ENCODE measurements at regions of chr10 and their contacts with region 1.

Region 1: GRCh38 chr10:75235375-75236177 is at the start of gene COMTD1:
- DNase-seq: peak; percentile 98
- ATAC-seq: peak; percentile 76
- H3K4me3 Mint-ChIP-seq: peak within 1 kb of the TSS; percentile 79
- H3K27ac Mint-ChIP-seq: peak within 1 kb of the TSS; percentile 89
- H3K4me1 Mint-ChIP-seq: peaks cover 31% of the 10 kb centered on the region
- H3K27me3 Mint-ChIP-seq: no peaks in the 10 kb centered on the region
- total RNA-seq, gene COMTD1: 28.1 to 41.0 TPM

Region 2: DNA sequence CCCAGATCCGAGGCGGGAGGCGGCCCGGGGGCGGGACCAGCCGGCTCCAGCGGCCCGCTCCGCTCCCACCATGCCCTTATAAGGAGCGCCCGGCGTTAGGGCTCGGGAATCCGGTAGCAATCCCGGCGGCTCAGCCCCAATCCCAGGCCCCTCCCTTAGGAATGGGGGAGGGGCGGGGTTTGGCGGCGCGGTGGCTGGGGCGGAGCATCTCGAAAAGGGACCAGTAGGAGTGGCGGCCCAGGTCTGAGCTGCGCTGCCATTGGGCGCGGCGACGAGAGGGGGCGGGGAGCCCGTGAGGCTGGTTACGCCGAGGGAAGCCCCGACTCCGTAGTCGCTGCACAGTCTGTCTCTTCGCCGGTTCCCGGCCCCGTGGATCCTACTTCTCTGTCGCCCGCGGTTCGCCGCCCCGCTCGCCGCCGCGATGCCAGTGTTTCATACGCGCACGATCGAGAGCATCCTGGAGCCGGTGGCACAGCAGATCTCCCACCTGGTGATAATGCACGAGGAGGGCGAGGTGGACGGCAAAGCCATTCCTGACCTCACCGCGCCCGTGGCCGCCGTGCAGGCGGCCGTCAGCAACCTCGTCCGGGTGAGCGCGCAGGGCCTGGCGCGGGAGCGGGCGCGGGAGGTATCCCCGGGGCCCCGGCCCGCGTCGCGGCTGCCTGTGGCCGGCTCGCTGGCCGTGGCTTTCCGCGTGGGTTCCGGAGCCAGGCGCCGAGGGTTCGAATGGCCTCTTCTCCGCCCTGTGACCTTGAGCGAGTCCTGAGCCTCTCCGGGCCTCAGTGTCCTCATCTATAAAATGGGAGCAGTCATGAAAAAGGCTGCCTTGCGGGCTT is 1237.6 kb before region 1 on chr10 and contains the start of gene VCL:
- CTCF ChIA-PET with region 1: no interaction called
- POLR2A ChIA-PET with region 1: interaction called, 7 read pairs
- intact Hi-C with region 1: loop called in 1 of 2 experiments (anchors 10 kb)
- DNase-seq: peak; percentile 97
- ATAC-seq: peak; percentile 98
- H3K4me3 Mint-ChIP-seq: peak within 1 kb of the TSS; percentile 89
- H3K27ac Mint-ChIP-seq: peak within 1 kb of the TSS; percentile 97
- H3K4me1 Mint-ChIP-seq: peaks cover 39% of the 10 kb centered on the region
- H3K27me3 Mint-ChIP-seq: no peaks in the 10 kb centered on the region
- total RNA-seq, gene VCL: 20.7 to 22.7 TPM

Region 3: DNA sequence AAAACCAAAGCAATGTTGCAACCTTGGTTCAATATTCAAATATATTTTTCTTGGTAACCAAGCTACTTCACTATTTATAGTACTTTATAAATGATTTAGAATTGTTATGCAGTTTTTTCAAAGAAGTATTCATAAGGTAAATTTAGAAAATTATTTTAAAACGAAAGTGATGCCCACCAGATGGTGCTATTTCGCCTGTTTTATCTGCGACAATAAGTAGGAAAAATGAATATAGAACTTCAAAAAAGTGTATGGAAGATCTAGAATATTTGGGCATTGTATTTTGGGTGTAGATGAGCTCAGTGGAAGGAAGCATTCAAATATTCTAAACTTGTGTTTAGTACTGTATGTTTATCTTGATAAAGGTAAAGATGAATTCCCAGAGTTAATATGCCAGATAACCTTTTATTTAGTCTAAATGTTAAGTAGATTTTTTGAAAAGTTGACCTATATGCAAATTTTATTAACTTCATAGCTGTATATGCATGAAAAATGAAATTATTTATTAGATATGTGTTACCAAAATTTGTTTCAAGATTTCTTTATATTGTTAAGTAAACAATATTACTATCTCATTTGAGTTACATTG is 991.4 kb before region 1 on chr10:
- CTCF ChIA-PET with region 1: interaction called, 5 read pairs
- POLR2A ChIA-PET with region 1: no interaction called
- intact Hi-C with region 1: loop called in 1 of 2 experiments (anchors 1 kb)
- DNase-seq: peak; percentile 35
- ATAC-seq: no peak
- H3K4me3 Mint-ChIP-seq: no peak overlapping the region
- H3K27ac Mint-ChIP-seq: no peak overlapping the region
- H3K4me1 Mint-ChIP-seq: no peaks in the 10 kb centered on the region
- H3K27me3 Mint-ChIP-seq: no peaks in the 10 kb centered on the region

Region 4: GRCh38 chr10:74738985-74739567 is 496.5 kb before region 1 on chr10:
- CTCF ChIA-PET with region 1: no interaction called
- POLR2A ChIA-PET with region 1: no interaction called
- intact Hi-C with region 1: loop called in 1 of 2 experiments (anchors 5 kb)
- DNase-seq: peak; percentile 32
- ATAC-seq: peak; percentile 65
- H3K4me3 Mint-ChIP-seq: no peak overlapping the region
- H3K27ac Mint-ChIP-seq: peak overlapping the region; percentile 76
- H3K4me1 Mint-ChIP-seq: peaks cover 15% of the 10 kb centered on the region
- H3K27me3 Mint-ChIP-seq: no peaks in the 10 kb centered on the region

Region 5: GRCh38 chr10:75111367-75111906 is 124.1 kb before region 1 on chr10 and contains the start of gene SAMD8:
- CTCF ChIA-PET with region 1: interaction called, 12 read pairs
- POLR2A ChIA-PET with region 1: interaction called, 4 read pairs
- intact Hi-C with region 1: loop called (anchors 1 kb)
- DNase-seq: peak; percentile 99
- ATAC-seq: peak; percentile 90
- H3K4me3 Mint-ChIP-seq: peak within 1 kb of the TSS; percentile 99
- H3K27ac Mint-ChIP-seq: peak within 1 kb of the TSS; percentile 99
- H3K4me1 Mint-ChIP-seq: peaks cover 51% of the 10 kb centered on the region
- H3K27me3 Mint-ChIP-seq: no peaks in the 10 kb centered on the region
- total RNA-seq, gene SAMD8: 20.5 to 20.9 TPM

Region 6: DNA sequence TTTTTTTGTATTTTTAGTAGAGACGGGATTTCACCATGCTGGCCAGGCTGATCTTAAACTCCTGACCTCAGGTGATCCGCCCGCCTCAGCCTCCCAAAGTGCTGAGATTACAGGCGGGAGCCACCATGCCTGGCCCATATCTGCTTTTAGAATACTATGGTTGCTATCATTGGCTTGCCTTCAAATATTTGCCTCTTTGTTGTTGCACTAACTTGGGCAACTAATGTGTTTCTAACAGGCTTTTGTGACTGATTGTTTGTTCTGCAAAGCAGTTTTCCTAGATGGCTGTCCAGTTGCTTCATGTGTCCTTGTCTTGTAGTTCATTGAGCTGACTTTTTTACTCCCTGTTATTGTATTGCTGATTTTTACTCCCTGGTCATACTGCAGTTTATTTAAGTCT is 15.3 kb before region 1 on chr10:
- CTCF ChIA-PET with region 1: interaction called, 17 read pairs
- POLR2A ChIA-PET with region 1: interaction called, 4 read pairs
- intact Hi-C with region 1: no loop called
- DNase-seq: no peak
- ATAC-seq: no peak
- H3K4me3 Mint-ChIP-seq: no peak overlapping the region
- H3K27ac Mint-ChIP-seq: peak overlapping the region; percentile 67
- H3K4me1 Mint-ChIP-seq: peaks cover 49% of the 10 kb centered on the region
- H3K27me3 Mint-ChIP-seq: no peaks in the 10 kb centered on the region